ENCODE measurements at regions of chr5 and their contacts with region 1.

Region 1: DNA sequence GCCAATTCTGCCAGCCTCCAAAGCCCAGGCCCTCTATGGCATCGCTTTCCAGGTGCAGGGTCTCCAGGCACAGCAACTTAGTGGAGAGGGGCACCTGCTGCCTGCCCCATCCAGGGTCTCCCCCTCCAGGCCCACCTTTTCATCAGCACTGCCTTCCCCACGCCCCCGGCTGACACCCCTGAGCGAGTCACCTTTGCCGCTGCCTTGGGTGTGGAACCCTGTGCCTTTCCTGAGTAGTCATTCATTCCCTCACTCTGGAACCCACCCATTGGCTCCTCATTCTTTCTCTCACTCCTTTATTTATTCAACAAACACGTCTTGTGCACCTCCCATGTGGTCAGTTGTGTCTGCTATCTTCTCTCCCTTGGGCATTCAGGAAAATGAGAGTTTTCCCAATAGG is 14.5 kb upstream of the RPL26L1 start:
- DNase-seq: no peak
- H3K4me3 Mint-ChIP-seq: no peak overlapping the region
- H3K27ac Mint-ChIP-seq: no peak overlapping the region
- H3K4me1 Mint-ChIP-seq: peaks cover 18% of the 10 kb centered on the region
- H3K27me3 Mint-ChIP-seq: no peaks in the 10 kb centered on the region
- CTCF ChIP-seq: no peak

Region 2: GRCh38 chr5:172473427-172473826 is 471.3 kb before region 1 on chr5:
- CTCF ChIA-PET with region 1: no interaction called
- POLR2A ChIA-PET with region 1: no interaction called
- intact Hi-C with region 1: loop called (anchors 5 kb)
- DNase-seq: no peak
- H3K4me3 Mint-ChIP-seq: no peak overlapping the region
- H3K27ac Mint-ChIP-seq: no peak overlapping the region
- H3K4me1 Mint-ChIP-seq: no peaks in the 10 kb centered on the region
- H3K27me3 Mint-ChIP-seq: peaks cover 9% of the 10 kb centered on the region
- CTCF ChIP-seq: no peak

Region 3: GRCh38 chr5:173029499-173029921 is 84.8 kb after region 1 on chr5:
- CTCF ChIA-PET with region 1: no interaction called
- POLR2A ChIA-PET with region 1: no interaction called
- intact Hi-C with region 1: no loop called
- DNase-seq: no peak
- H3K4me3 Mint-ChIP-seq: no peak overlapping the region
- H3K27ac Mint-ChIP-seq: no peak overlapping the region
- H3K4me1 Mint-ChIP-seq: peaks cover 5% of the 10 kb centered on the region
- H3K27me3 Mint-ChIP-seq: no peaks in the 10 kb centered on the region
- CTCF ChIP-seq: no peak